K562 (cell line): ENCODE measurements at regions of chr3 and their contacts with region 1.

Region 1: DNA sequence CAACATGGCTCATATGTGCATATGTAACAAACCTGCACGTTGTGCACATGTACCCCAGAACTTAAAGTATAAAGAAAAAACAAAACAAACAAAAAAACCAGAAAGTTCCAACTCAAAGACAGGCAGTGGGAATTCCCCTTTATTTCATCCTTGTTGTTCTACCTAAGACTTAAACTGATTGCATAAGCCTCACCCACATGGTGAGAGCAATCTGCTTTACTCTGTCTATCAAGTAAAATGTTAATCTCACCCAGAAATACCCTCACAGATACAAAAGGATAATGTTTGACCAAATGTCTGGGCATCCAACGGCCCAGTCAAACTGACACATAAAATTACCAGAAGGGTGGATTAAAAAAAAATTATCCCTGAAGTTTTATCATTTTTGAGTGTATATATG is 190.9 kb upstream of the PLSCR5 start:
- DNase-seq: no peak
- ATAC-seq: no peak
- H3K4me3 ChIP-seq: no peak overlapping the region
- H3K27ac ChIP-seq: no peak overlapping the region
- H3K4me1 ChIP-seq: no peaks in the 10 kb centered on the region
- H3K27me3 ChIP-seq: no peaks in the 10 kb centered on the region
- CTCF ChIP-seq: no peak
- EP300 ChIP-seq: no peak
- POLR2A ChIP-seq: no peak
- RAD21 ChIP-seq: no peak

Region 2: DNA sequence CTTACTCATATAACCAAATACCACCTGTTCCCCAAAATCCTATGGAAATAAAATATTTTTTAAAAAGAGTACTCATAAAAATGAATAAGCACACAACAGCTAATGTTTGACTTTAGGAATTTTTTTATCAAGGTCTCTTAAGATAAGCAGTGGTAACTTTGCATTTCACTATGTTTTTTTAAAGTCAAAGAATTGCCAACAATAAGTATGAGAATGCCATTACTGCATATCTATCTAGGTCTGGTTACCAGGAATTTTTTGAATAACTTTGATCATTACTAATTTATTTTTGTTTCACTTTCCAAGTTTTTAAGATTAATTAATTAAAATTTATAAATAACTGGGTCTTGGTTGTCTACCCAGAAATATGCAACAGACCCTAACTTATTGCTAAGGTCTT is 586.7 kb before region 1 on chr3:
- CTCF ChIA-PET with region 1: no interaction called
- POLR2A ChIA-PET with region 1: no interaction called
- in situ Hi-C with region 1: no loop called
- intact Hi-C with region 1: loop called (anchors 5 kb)
- DNase-seq: no peak
- ATAC-seq: no peak
- H3K4me3 ChIP-seq: no peak overlapping the region
- H3K27ac ChIP-seq: no peak overlapping the region
- H3K4me1 ChIP-seq: no peaks in the 10 kb centered on the region
- H3K27me3 ChIP-seq: no peaks in the 10 kb centered on the region
- CTCF ChIP-seq: no peak
- EP300 ChIP-seq: no peak
- POLR2A ChIP-seq: no peak
- RAD21 ChIP-seq: no peak